CD4-positive, alpha-beta T cell (primary cell): ENCODE measurements at regions of chr12 and their contacts with region 1.

Region 1: DNA sequence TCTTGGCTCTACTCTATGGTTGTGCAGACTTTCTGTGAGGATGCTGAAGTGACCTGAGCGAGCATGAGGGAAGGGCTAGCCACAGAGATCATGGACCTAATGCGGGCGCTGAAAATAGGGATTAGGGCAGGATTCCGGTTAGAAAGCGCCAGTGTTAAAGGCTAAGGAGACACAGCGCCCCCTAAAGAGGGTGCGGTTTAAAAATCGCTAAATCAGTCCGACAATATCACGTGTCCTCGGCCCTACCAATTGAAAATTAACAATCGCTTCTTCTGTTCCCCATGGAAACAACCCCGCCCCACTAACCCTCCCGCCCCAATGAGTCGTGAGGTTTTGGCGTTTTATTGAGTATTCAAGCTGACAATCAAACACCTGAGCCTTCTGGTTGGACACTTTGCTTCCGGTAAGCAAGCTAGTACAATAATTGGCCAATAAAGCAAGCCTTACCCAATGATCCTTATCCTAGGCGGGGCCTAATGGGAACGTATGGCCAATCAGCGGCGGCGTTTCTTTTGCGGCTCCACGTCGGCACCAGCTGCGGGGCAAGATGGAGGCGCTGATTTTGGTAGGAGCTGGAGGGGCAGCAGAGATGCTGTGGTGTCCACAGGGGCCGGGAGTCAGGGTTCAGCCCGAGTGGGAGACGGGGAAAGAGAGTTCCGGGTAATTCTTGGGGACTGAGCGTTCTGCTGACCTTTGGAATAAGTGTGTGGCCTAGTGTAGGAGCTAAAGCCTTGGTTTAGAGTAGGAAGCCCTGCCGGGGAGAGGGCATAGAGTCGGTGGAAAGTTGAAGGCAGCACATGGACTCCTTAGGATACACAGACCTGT is at the start of gene COPZ1:
- DNase-seq: peak; percentile 84 to 99 (median 90)
- ATAC-seq: peak; percentile 94
- H3K4me3 ChIP-seq: peak within 1 kb of the TSS; percentile 76
- H3K4me3 Mint-ChIP-seq: peak within 1 kb of the TSS; percentile 92
- H3K27ac ChIP-seq: peak within 1 kb of the TSS; percentile 67 to 78
- H3K27ac Mint-ChIP-seq: peak within 1 kb of the TSS; percentile 93
- H3K4me1 ChIP-seq: peaks cover 22% of the 10 kb centered on the region
- H3K4me1 Mint-ChIP-seq: peaks cover 36% of the 10 kb centered on the region
- H3K27me3 ChIP-seq: no peaks in the 10 kb centered on the region
- H3K27me3 Mint-ChIP-seq: no peaks in the 10 kb centered on the region
- CTCF ChIP-seq: peak; percentile 88
- total RNA-seq, gene COPZ1: 31.2 to 33.9 TPM

Region 2: DNA sequence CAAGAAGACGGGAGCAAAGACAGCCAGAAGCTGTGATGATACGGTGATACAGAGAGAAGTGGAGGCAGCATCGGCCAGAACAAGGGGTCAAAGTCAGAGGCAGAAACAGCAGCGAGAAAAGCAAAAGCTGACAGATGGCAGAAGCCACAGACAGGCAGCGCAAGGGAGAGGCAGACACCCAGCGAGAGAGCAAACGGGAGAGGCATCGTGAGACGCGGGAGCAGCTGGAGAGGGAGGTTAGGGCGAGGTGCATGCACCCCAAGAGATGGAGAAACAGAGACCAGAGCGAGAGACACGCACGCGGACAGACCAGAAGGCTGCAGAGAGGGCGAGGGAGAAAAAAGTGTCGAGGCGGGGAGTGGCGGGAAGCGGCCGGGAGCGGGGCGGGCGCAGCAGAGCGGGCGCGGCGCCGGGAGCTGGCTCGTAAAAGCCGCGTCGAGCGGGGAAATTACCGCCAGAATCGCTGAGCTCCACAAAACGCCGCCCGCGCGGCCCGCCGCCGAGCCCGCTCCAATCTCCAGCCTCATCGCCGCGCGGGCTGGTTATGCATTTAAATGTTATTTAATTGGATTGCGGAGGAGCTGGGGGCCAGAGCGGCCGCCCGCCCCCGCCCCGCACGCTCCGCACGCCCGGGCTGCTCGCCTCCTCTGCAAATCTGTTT is 151.6 kb before region 1 on chr12:
- CTCF ChIA-PET with region 1: no interaction called
- POLR2A ChIA-PET with region 1: no interaction called
- intact Hi-C with region 1: no loop called
- DNase-seq: peak in 7 of 14 experiments; percentile 2 to 61 (median 17)
- ATAC-seq: peak; percentile 61
- H3K4me3 ChIP-seq: peak overlapping the region; percentile 12
- H3K4me3 Mint-ChIP-seq: no peak overlapping the region
- H3K27ac ChIP-seq: no peak overlapping the region
- H3K27ac Mint-ChIP-seq: no peak overlapping the region
- H3K4me1 ChIP-seq: peaks cover 11% of the 10 kb centered on the region
- H3K4me1 Mint-ChIP-seq: peaks cover 5% of the 10 kb centered on the region
- H3K27me3 ChIP-seq: peaks cover 36 to 66% of the 10 kb centered on the region in 2 experiments
- H3K27me3 Mint-ChIP-seq: peaks cover 4% of the 10 kb centered on the region
- CTCF ChIP-seq: no peak

Region 3: GRCh38 chr12:54285150-54286041 is 39.4 kb before region 1 on chr12:
- CTCF ChIA-PET with region 1: interaction called, 5 read pairs
- POLR2A ChIA-PET with region 1: interaction called, 76 read pairs
- intact Hi-C with region 1: loop called (anchors 1 to 2 kb)
- DNase-seq: no peak
- ATAC-seq: no peak
- H3K4me3 ChIP-seq: no peak overlapping the region
- H3K4me3 Mint-ChIP-seq: peak overlapping the region; percentile 68
- H3K27ac ChIP-seq: no peak overlapping the region
- H3K27ac Mint-ChIP-seq: peak overlapping the region; percentile 41
- H3K4me1 ChIP-seq: peaks cover 41% of the 10 kb centered on the region
- H3K4me1 Mint-ChIP-seq: no peaks in the 10 kb centered on the region
- H3K27me3 ChIP-seq: no peaks in the 10 kb centered on the region
- H3K27me3 Mint-ChIP-seq: no peaks in the 10 kb centered on the region
- CTCF ChIP-seq: peak; percentile 40